ENCODE measurements at regions of chr4 and their contacts with region 1.

Region 1: GRCh38 chr4:10582059-10582686 is 102.4 kb downstream of the CLNK start:
- DNase-seq: peak; percentile 35
- H3K4me3 ChIP-seq: no peak overlapping the region
- H3K27ac ChIP-seq: no peak overlapping the region
- H3K4me1 ChIP-seq: no peaks in the 10 kb centered on the region
- H3K27me3 ChIP-seq: no peaks in the 10 kb centered on the region
- CTCF ChIP-seq: peak; percentile 89 to 99

Region 2: GRCh38 chr4:10496200-10496599 is 86.0 kb before region 1 on chr4:
- CTCF ChIA-PET with region 1: no interaction called
- dilution Hi-C with region 1: no loop called
- in situ Hi-C with region 1: no loop called
- intact Hi-C with region 1: no loop called
- DNase-seq: no peak
- H3K4me3 ChIP-seq: no peak overlapping the region
- H3K27ac ChIP-seq: no peak overlapping the region
- H3K4me1 ChIP-seq: no peaks in the 10 kb centered on the region
- H3K27me3 ChIP-seq: no peaks in the 10 kb centered on the region
- CTCF ChIP-seq: no peak

Region 3: DNA sequence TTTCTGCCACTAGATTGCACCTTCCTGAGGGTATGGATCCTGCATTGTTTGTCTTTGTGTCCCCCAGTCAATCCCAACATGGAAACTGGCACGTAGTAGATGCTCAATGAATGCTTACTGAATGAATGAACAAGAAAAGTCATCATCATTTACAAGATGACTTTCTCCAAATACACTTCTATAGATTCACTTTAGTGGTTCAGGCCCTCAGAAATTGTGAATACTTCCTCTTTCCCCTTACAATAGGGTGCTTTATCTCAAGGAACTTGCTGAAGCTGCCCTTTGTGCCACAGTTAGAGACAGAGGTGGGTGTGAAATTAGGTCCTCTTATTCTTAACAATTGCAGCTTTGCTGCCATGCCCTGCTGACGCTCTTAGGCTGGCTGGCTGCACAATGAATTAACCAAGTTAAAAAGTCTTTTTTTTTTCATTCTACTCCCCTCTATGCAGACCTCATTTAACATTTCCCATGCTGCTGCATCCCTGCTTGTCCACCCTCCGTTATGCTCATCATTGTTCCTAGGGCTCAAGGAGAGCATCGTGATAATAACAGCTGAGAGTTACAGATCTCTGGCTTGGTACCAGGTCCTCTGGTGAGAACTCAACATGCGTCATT is 16.9 kb before region 1 on chr4:
- CTCF ChIA-PET with region 1: no interaction called
- dilution Hi-C with region 1: no loop called
- in situ Hi-C with region 1: no loop called
- intact Hi-C with region 1: no loop called
- DNase-seq: no peak
- H3K4me3 ChIP-seq: no peak overlapping the region
- H3K27ac ChIP-seq: no peak overlapping the region
- H3K4me1 ChIP-seq: no peaks in the 10 kb centered on the region
- H3K27me3 ChIP-seq: peaks cover 5% of the 10 kb centered on the region
- CTCF ChIP-seq: no peak

Region 4: GRCh38 chr4:10684631-10685030 is 102.5 kb after region 1 on chr4 and contains the start of gene CLNK:
- CTCF ChIA-PET with region 1: no interaction called
- dilution Hi-C with region 1: no loop called
- in situ Hi-C with region 1: no loop called
- intact Hi-C with region 1: no loop called
- DNase-seq: no peak
- H3K4me3 ChIP-seq: no peak within 1 kb of the TSS
- H3K27ac ChIP-seq: no peak within 1 kb of the TSS
- H3K4me1 ChIP-seq: no peaks in the 10 kb centered on the region
- H3K27me3 ChIP-seq: no peaks in the 10 kb centered on the region
- CTCF ChIP-seq: no peak
- total RNA-seq, gene CLNK: not detected

Region 5: GRCh38 chr4:10893395-10893794 is 311.2 kb after region 1 on chr4:
- CTCF ChIA-PET with region 1: no interaction called
- dilution Hi-C with region 1: no loop called
- in situ Hi-C with region 1: no loop called
- intact Hi-C with region 1: loop called (anchors 5 kb)
- DNase-seq: peak; percentile 1
- H3K4me3 ChIP-seq: no peak overlapping the region
- H3K27ac ChIP-seq: no peak overlapping the region
- H3K4me1 ChIP-seq: no peaks in the 10 kb centered on the region
- H3K27me3 ChIP-seq: no peaks in the 10 kb centered on the region
- CTCF ChIP-seq: peak; percentile 6 to 43

Region 6: GRCh38 chr4:11497212-11497806 is 915.1 kb after region 1 on chr4:
- CTCF ChIA-PET with region 1: no interaction called
- dilution Hi-C with region 1: no loop called
- in situ Hi-C with region 1: no loop called
- intact Hi-C with region 1: loop called (anchors 1 kb)
- DNase-seq: peak; percentile 79
- H3K4me3 ChIP-seq: no peak overlapping the region
- H3K27ac ChIP-seq: peak overlapping the region; percentile 93
- H3K4me1 ChIP-seq: peaks cover 38% of the 10 kb centered on the region
- H3K27me3 ChIP-seq: no peaks in the 10 kb centered on the region
- CTCF ChIP-seq: peak; percentile 42 to 52

Region 7: GRCh38 chr4:11720292-11720691 is 1138.1 kb after region 1 on chr4:
- CTCF ChIA-PET with region 1: no interaction called
- dilution Hi-C with region 1: no loop called
- in situ Hi-C with region 1: loop called in 1 of 2 experiments (anchors 25 kb)
- intact Hi-C with region 1: loop called (anchors 2 kb)
- DNase-seq: peak; percentile 43
- H3K4me3 ChIP-seq: no peak overlapping the region
- H3K27ac ChIP-seq: peak overlapping the region; percentile 6
- H3K4me1 ChIP-seq: peaks cover 7% of the 10 kb centered on the region
- H3K27me3 ChIP-seq: no peaks in the 10 kb centered on the region
- CTCF ChIP-seq: peak; percentile 89 to 95

Region 8: GRCh38 chr4:11765849-11766453 is 1183.8 kb after region 1 on chr4:
- CTCF ChIA-PET with region 1: no interaction called
- dilution Hi-C with region 1: no loop called
- in situ Hi-C with region 1: loop called in 1 of 2 experiments (anchors 25 kb)
- intact Hi-C with region 1: loop called (anchors 2 kb)
- DNase-seq: peak; percentile 41
- H3K4me3 ChIP-seq: no peak overlapping the region
- H3K27ac ChIP-seq: no peak overlapping the region
- H3K4me1 ChIP-seq: no peaks in the 10 kb centered on the region
- H3K27me3 ChIP-seq: no peaks in the 10 kb centered on the region
- CTCF ChIP-seq: peak; percentile 79 to 80

Measured in mammary epithelial cell (primary cell).